ENCODE measurements at regions of chr1 and their contacts with region 1.

Region 1: DNA sequence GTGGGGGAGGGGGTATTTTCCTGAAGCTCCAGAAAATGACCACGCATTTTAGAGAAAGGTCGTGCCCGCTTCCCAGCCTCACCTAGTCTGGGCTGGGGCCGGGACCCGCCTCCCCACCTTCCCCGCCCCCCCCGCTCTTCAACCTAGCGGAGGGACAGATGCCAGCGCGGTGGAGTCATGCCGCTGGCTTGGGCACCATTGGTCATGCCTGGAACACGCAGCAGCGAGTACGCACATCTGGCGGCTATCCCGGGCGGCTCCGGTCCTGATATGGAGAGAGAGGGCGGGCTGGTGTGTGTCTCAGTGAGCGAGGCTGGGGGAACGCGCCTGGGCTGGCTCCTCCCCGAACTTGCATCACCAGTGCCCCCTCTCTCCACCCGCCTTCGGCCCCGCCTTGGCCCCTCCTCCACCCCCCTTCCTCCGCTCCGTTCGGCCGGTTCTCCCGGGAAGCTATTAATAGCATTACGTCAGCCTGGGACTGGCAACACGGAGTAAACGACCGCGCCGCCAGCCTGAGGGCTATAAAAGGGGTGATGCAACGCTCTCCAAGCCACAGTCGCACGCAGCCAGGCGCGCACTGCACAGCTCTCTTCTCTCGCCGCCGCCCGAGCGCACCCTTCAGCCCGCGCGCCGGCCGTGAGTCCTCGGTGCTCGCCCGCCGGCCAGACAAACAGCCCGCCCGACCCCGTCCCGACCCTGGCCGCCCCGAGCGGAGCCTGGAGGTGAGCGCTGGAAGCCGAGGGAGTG is at the start of gene ATF3:
- DNase-seq: peak; percentile 86
- H3K4me3 ChIP-seq: peak within 1 kb of the TSS; percentile 51 to 82 (median 71)
- H3K27ac ChIP-seq: peak within 1 kb of the TSS; percentile 89 to 99 (median 98)
- H3K4me1 ChIP-seq: peaks cover 17 to 68% (median 31%) of the 10 kb centered on the region in 3 donors
- H3K27me3 ChIP-seq: peaks cover 0 to 67% (median 0%) of the 10 kb centered on the region in 4 donors
- CTCF ChIP-seq: no peak
- POLR2A ChIP-seq: peak; percentile 54 to 99 (median 92)
- total RNA-seq, gene ATF3: 2.1 to 6.5 (median 3.0) TPM

Region 2: DNA sequence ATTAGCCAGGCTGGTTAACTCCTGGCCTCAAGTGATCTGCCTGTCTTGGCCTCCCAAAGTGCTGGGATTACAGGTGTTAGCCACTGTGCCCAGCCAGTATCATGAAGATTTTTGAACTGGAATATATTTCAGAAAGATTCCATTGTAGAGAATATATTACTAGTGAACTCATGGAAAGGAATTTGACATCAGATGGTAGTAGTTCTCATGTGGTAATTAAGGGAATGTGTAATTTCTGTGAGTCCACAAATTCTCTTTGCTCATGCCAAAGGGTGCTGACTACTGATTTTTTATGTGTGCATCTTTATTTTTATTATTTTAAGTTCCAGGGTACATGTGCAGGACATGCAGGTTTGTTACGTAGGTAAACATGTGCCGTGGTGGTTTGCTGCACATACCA is 562.4 kb before region 1 on chr1:
- intact Hi-C with region 1: no loop called
- DNase-seq: no peak
- H3K4me3 ChIP-seq: no peak overlapping the region
- H3K27ac ChIP-seq: no peak overlapping the region
- H3K4me1 ChIP-seq: no peaks in the 10 kb centered on the region
- H3K27me3 ChIP-seq: no peaks in the 10 kb centered on the region
- CTCF ChIP-seq: no peak
- POLR2A ChIP-seq: no peak

Region 3: GRCh38 chr1:212477014-212477679 is 131.2 kb before region 1 on chr1:
- intact Hi-C with region 1: loop called (anchors 10 kb)
- DNase-seq: no peak
- H3K4me3 ChIP-seq: no peak overlapping the region
- H3K27ac ChIP-seq: no peak overlapping the region
- H3K4me1 ChIP-seq: peaks cover 0 to 21% (median 6%) of the 10 kb centered on the region in 3 donors
- H3K27me3 ChIP-seq: peaks cover 0 to 8% (median 0%) of the 10 kb centered on the region in 4 donors
- CTCF ChIP-seq: peak; percentile 77 to 88 (median 84)
- POLR2A ChIP-seq: no peak

Region 4: DNA sequence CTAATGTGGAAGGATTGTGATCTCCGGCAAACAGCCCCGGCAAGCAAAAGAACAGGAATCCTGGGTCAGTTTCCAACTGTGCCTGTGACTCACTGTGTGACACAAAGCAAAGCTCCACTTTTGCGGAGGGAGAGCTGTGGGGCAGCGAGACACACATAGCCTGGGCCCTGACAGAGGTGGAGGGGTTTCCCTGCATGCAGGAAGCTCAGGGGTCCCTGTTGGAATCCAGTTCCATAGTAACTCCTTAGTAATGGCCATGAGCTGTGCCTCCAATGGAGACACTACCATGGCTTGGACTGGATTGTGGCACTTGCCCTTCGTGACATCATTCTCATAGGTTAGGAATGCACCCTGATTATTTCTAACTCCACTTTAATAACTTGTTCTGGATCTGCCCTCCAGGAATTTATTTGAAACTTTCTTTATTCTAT is 46.9 kb before region 1 on chr1:
- intact Hi-C with region 1: loop called (anchors 5 kb)
- DNase-seq: no peak
- H3K4me3 ChIP-seq: no peak overlapping the region
- H3K27ac ChIP-seq: peak overlapping the region in 3 of 4 donors; percentile 53 to 96 (median 95)
- H3K4me1 ChIP-seq: peaks cover 6 to 34% (median 7%) of the 10 kb centered on the region in 3 donors
- H3K27me3 ChIP-seq: no peaks in the 10 kb centered on the region
- CTCF ChIP-seq: no peak
- POLR2A ChIP-seq: no peak

Region 5: GRCh38 chr1:212814537-212815334 is 206.4 kb after region 1 on chr1:
- intact Hi-C with region 1: no loop called
- DNase-seq: no peak
- H3K4me3 ChIP-seq: no peak overlapping the region
- H3K27ac ChIP-seq: no peak overlapping the region
- H3K4me1 ChIP-seq: peaks cover 0 to 7% (median 0%) of the 10 kb centered on the region in 3 donors
- H3K27me3 ChIP-seq: no peaks in the 10 kb centered on the region
- CTCF ChIP-seq: peak in 4 of 6 experiments; percentile 4 to 43 (median 24)
- POLR2A ChIP-seq: no peak